A549 (cell line): ENCODE measurements at regions of chr1 and their contacts with region 1.

Region 1: GRCh38 chr1:17661546-17662157 is 93.5 kb upstream of the ACTL8 start:
- DNase-seq: peak; percentile 40 to 66
- ATAC-seq: peak; percentile 72 to 86
- H3K4me3 ChIP-seq: no peak overlapping the region
- H3K27ac ChIP-seq: no peak overlapping the region
- H3K4me1 ChIP-seq: no peaks in the 10 kb centered on the region
- CTCF ChIP-seq: peak; percentile 72
- EP300 ChIP-seq: no peak
- POLR2A ChIP-seq: no peak
- RAD21 ChIP-seq: peak; percentile 78 to 80

Region 2: GRCh38 chr1:17287130-17287776 is 374.4 kb before region 1 on chr1:
- CTCF ChIA-PET with region 1: no interaction called
- POLR2A ChIA-PET with region 1: no interaction called
- DNase-seq: peak; percentile 63 to 75
- ATAC-seq: peak; percentile 89 to 96
- H3K4me3 ChIP-seq: no peak overlapping the region
- H3K27ac ChIP-seq: peak overlapping the region; percentile 77 to 89
- H3K4me1 ChIP-seq: peaks cover 48% of the 10 kb centered on the region
- CTCF ChIP-seq: no peak
- EP300 ChIP-seq: peak; percentile 84 to 87; a peak in 4 of 5 replicates
- POLR2A ChIP-seq: no peak
- RAD21 ChIP-seq: peak; percentile 21 to 45; a peak in 3 of 5 replicates

Region 3: GRCh38 chr1:17696417-17697301 is 35.0 kb after region 1 on chr1:
- CTCF ChIA-PET with region 1: interaction called, 40 read pairs
- POLR2A ChIA-PET with region 1: no interaction called
- DNase-seq: peak; percentile 38 to 59
- ATAC-seq: peak; percentile 91 to 92; a peak in 5 of 6 replicates
- H3K4me3 ChIP-seq: no peak overlapping the region
- H3K27ac ChIP-seq: no peak overlapping the region
- H3K4me1 ChIP-seq: peaks cover 4% of the 10 kb centered on the region; the same call in 1 of the 3 replicates
- CTCF ChIP-seq: peak; percentile 48
- EP300 ChIP-seq: no peak
- POLR2A ChIP-seq: no peak
- RAD21 ChIP-seq: peak; percentile 42 to 44; a peak in 4 of 5 replicates

Region 4: DNA sequence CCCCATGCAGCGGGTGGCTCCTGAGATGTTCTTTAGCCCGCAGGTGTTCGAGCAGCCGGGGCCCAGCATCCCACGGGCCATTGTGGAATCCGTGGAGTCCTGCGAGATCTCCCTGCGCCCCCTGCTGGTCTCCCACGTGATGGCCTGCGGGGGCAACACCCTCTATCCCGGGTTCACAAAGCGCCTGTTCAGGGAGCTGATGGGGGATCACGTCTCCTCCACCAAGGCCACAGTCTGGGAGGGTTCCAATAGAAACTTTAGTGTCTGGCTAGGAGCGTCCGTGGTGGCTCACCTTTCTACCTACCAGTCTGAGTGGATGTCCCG is 164.5 kb after region 1 on chr1:
- CTCF ChIA-PET with region 1: interaction called, 11 read pairs
- POLR2A ChIA-PET with region 1: no interaction called
- DNase-seq: peak; percentile 17 to 21
- ATAC-seq: peak; percentile 66 to 83; a peak in 5 of 6 replicates
- H3K4me3 ChIP-seq: no peak overlapping the region
- H3K27ac ChIP-seq: no peak overlapping the region
- H3K4me1 ChIP-seq: no peaks in the 10 kb centered on the region
- CTCF ChIP-seq: peak; percentile 39
- EP300 ChIP-seq: no peak
- POLR2A ChIP-seq: no peak
- RAD21 ChIP-seq: peak; percentile 33 to 47; a peak in 4 of 5 replicates

Region 5: DNA sequence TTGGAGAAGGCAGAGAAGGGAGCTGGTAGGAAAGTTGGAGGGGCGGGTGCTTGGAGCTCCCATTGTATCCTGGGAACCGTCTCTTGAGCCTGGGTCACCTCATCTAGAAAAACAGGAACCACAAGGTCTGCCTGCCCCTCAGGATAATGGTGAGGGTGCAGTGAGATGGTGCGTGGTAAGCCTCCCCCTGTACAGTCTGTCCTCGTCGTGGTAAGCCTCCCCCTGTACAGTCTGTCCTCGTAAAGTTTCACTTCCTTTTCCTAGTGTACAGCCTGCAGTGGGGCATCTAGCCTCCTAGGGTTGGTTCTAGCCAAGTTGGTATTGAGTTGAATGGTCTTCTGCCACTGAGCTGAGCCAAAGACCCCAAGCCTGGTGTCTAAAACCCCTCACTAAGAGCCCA is 379.4 kb after region 1 on chr1:
- CTCF ChIA-PET with region 1: interaction called, 11 read pairs
- POLR2A ChIA-PET with region 1: no interaction called
- DNase-seq: no peak
- ATAC-seq: no peak
- H3K4me3 ChIP-seq: no peak overlapping the region
- H3K27ac ChIP-seq: no peak overlapping the region
- H3K4me1 ChIP-seq: no peaks in the 10 kb centered on the region
- CTCF ChIP-seq: no peak
- EP300 ChIP-seq: no peak
- POLR2A ChIP-seq: no peak
- RAD21 ChIP-seq: no peak

Region 6: DNA sequence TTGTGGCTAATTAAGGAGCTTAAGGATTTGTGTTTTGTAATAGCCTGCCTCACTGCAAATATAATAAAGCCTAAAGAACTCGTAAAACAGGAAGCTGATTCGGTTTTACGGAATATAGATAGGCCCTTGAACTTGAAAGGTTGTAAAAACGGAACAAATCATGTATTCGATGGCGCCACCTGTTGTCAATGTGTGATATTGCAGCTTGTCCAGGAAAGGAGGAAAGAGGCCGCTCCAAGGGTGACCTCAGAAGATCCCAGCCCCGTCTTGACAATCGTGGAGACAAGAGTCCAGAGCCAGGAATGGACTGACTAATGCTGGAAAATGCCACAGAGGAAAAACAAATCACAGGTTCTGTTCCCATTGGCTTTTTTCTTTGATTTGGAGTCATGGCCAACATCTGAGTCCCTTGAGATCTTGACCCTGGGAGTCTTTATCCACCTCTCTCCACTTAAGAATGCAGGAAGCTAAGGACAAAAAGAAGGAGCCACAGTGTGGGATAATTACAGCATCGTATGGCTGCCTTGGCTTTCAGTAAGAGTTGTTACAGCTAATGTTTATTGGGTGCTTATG is 438.9 kb after region 1 on chr1:
- CTCF ChIA-PET with region 1: interaction called, 15 read pairs
- POLR2A ChIA-PET with region 1: no interaction called
- DNase-seq: peak; percentile 54 to 63
- ATAC-seq: peak; percentile 31 to 78; a peak in 3 of 6 replicates
- H3K4me3 ChIP-seq: no peak overlapping the region
- H3K27ac ChIP-seq: no peak overlapping the region
- H3K4me1 ChIP-seq: no peaks in the 10 kb centered on the region
- CTCF ChIP-seq: peak; percentile 64
- EP300 ChIP-seq: no peak
- POLR2A ChIP-seq: no peak
- RAD21 ChIP-seq: peak; percentile 44 to 51; a peak in 4 of 5 replicates